ENCODE measurements at regions of chr10 and their contacts with region 1.

Region 1: GRCh38 chr10:97334370-97335175 is at the start of gene FRAT2:
- DNase-seq: peak; percentile 83
- H3K4me3 Mint-ChIP-seq: peak within 1 kb of the TSS; percentile 86
- H3K27ac Mint-ChIP-seq: peak within 1 kb of the TSS; percentile 75
- H3K4me1 Mint-ChIP-seq: peaks cover 34% of the 10 kb centered on the region
- H3K27me3 Mint-ChIP-seq: peaks cover 24% of the 10 kb centered on the region
- total RNA-seq, gene FRAT2: 10.8 and 11.2 TPM in 2 replicates

Region 2: DNA sequence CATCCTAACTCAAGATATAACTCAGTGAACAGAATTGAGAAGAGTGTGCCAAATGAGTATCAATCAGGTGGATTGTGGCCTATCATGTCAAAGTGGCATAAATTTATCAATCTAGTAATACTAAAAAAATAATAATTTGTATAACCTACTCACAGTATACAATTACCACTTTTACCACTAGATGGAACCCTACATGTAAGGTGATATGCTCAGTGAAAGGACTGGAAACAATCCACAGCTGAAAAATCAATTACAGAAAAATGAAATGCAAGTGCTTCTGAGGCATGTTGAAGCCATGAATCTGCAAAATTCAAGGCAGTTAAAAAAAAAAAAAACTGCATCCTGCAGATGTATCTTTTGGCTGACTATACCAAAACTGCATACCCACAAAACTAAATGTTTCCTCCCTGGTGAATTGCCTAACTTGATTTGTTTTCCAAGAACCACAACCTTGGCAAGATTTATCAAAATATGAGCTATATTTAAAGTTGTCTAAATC is 56.0 kb before region 1 on chr10:
- intact Hi-C with region 1: loop called (anchors 2 kb)
- DNase-seq: no peak
- H3K4me3 Mint-ChIP-seq: no peak overlapping the region
- H3K27ac Mint-ChIP-seq: no peak overlapping the region
- H3K4me1 Mint-ChIP-seq: peaks cover 12% of the 10 kb centered on the region
- H3K27me3 Mint-ChIP-seq: no peaks in the 10 kb centered on the region

Region 3: GRCh38 chr10:97292097-97292862 is 42.3 kb before region 1 on chr10 and contains the start of gene ARHGAP19:
- intact Hi-C with region 1: loop called (anchors 1 kb)
- DNase-seq: peak; percentile 92
- H3K4me3 Mint-ChIP-seq: peak within 1 kb of the TSS; percentile 91
- H3K27ac Mint-ChIP-seq: peak within 1 kb of the TSS; percentile 92
- H3K4me1 Mint-ChIP-seq: peaks cover 22% of the 10 kb centered on the region
- H3K27me3 Mint-ChIP-seq: peaks cover 3% of the 10 kb centered on the region
- total RNA-seq, gene ARHGAP19: 27.1 and 27.8 TPM in 2 replicates

Region 4: DNA sequence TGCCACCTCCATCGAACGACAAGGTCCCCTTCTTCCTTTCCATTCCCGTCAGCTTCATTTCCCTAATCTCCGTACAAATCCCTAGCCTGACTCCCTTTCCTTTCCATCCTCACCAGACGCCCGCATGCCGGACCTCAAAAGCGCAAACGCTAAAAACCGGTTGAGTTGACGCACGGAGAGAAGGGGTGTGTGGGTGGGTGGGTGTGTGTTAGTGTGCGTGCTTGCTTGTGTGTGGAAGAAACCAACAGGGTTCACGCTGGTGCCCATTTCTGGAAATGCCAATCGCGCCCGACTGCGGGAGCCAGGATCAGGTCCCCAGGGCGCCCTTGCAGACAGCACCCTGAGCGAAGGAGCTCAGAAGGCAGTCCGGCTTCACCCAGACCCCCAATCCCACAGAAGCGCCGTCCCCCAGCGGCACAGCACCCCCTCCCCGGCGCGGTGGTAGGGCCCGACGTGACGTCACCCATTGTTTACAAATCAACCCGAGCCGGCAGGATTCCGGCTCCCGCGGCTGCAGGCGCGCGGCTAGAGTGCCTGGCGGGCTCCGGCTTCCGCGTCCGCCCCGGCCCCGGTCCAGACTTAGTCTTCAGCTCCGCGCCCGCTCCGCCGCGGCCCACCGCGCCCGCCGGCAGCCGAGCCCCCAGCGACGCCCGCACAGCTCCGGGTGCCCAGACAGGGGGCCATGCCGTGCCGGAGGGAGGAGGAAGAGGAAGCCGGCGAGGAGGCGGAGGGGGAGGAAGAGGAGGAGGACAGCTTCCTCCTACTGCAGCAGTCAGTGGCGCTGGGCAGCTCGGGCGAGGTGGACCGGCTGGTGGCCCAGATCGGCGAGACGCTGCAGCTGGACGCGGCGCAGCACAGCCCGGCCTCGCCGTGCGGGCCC is 15.6 kb before region 1 on chr10 and contains the start of gene FRAT1:
- intact Hi-C with region 1: loop called (anchors 1 kb)
- DNase-seq: peak; percentile 86
- H3K4me3 Mint-ChIP-seq: peak within 1 kb of the TSS; percentile 87
- H3K27ac Mint-ChIP-seq: peak within 1 kb of the TSS; percentile 97
- H3K4me1 Mint-ChIP-seq: peaks cover 26% of the 10 kb centered on the region
- H3K27me3 Mint-ChIP-seq: peaks cover 24% of the 10 kb centered on the region
- total RNA-seq, gene FRAT1: 3.0 and 3.3 TPM in 2 replicates

Region 5: DNA sequence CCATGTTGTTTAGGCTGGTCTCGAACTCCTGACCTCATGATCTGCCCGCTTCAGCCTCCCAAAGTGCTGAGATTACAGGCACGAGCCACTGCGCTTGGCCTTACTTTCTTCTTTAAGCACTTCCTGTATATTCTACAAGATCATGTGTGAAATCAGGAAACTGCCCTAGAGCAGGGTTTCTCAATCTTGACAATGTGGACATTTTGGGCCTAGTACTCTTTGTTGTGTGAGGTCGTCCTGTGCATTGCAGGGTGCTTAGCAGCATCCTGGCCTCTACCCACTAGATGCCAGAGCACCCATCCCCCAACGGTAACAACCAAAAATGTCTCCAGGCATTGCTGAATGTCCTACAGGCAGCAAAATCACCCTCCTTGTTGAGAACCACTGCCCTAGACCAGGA is 41.8 kb after region 1 on chr10:
- intact Hi-C with region 1: no loop called
- DNase-seq: no peak
- H3K4me3 Mint-ChIP-seq: no peak overlapping the region
- H3K27ac Mint-ChIP-seq: no peak overlapping the region
- H3K4me1 Mint-ChIP-seq: no peaks in the 10 kb centered on the region
- H3K27me3 Mint-ChIP-seq: no peaks in the 10 kb centered on the region

Region 6: DNA sequence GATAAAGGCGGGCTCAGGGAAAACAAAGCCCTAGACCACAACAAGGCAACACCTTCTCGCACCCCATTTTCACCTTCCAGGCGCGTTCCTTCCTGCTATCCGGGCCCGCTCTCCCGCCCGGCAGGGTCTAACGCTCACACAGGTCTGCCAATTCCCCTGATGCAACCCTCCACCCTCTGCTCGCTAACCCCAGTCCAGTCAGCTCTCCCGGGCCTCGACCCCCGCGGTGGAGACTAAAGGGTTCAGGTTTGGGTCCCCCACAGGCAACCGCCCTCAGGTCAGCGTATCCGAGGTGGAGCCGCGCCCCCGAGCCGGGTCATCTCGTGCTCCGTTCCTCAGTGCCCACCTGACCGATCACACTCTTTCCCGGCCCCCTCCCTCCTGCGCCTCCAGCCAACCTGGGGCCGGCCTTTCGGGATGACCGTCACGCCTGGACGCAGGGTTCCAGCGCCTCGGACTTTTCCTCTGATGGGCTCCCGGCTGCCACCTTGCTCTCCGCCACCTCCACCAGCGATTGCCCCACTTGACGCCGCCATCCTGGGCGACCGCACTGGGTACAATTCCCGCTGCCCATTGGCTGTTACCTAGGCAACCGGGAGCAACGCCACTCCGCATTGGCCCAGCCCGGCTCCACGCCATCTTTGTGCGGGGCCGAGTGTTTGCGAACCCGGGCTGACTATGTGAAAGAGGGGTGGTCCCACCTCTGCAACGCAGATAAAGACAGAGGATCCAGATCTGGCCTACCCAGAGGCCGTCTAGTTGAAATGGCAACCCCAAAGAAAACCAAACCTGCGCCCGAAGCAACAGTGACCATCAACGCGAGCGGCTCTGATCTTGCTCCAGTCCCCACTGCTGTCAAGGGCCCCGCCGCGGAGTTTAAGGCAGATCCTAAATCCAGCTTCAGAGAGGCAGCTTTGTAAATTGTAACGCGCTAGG is 298.6 kb after region 1 on chr10 and contains the start of gene MORN4:
- intact Hi-C with region 1: loop called (anchors 1 kb)
- DNase-seq: peak; percentile 89
- H3K4me3 Mint-ChIP-seq: peak within 1 kb of the TSS; percentile 96
- H3K27ac Mint-ChIP-seq: peak within 1 kb of the TSS; percentile 89
- H3K4me1 Mint-ChIP-seq: peaks cover 19% of the 10 kb centered on the region
- H3K27me3 Mint-ChIP-seq: peaks cover 2% of the 10 kb centered on the region
- total RNA-seq, gene MORN4: 1.9 TPM in 2 replicates